Activated T-helper 2 cell treated with anti-CD3 and anti-CD28 coated beads, Interferon-gamma antibody, Interleukin-2, Interleukin-4, amounts not matched to agents 10 μg/mL and 5 μg/mL and 100 μg/mL, durations not matched to agents 14 hours and 24 hours and 36 hours (primary cell): ENCODE measurements at regions of chr1 and their contacts with region 1.

Region 1: GRCh38 chr1:238861342-238862066 is 524.9 kb upstream of the CHRM3 start:
- DNase-seq: no peak
- H3K4me3 Mint-ChIP-seq: no peak overlapping the region
- H3K27ac Mint-ChIP-seq: no peak overlapping the region
- H3K4me1 Mint-ChIP-seq: no peaks in the 10 kb centered on the region
- H3K27me3 Mint-ChIP-seq: no peaks in the 10 kb centered on the region

Region 2: GRCh38 chr1:238811211-238811879 is 50.2 kb before region 1 on chr1:
- intact Hi-C with region 1: no loop called
- DNase-seq: no peak
- H3K4me3 Mint-ChIP-seq: no peak overlapping the region
- H3K27ac Mint-ChIP-seq: no peak overlapping the region
- H3K4me1 Mint-ChIP-seq: no peaks in the 10 kb centered on the region
- H3K27me3 Mint-ChIP-seq: no peaks in the 10 kb centered on the region

Region 3: GRCh38 chr1:238826891-238827290 is 34.6 kb before region 1 on chr1:
- intact Hi-C with region 1: no loop called
- DNase-seq: no peak
- H3K4me3 Mint-ChIP-seq: no peak overlapping the region
- H3K27ac Mint-ChIP-seq: no peak overlapping the region
- H3K4me1 Mint-ChIP-seq: no peaks in the 10 kb centered on the region
- H3K27me3 Mint-ChIP-seq: no peaks in the 10 kb centered on the region

Region 4: DNA sequence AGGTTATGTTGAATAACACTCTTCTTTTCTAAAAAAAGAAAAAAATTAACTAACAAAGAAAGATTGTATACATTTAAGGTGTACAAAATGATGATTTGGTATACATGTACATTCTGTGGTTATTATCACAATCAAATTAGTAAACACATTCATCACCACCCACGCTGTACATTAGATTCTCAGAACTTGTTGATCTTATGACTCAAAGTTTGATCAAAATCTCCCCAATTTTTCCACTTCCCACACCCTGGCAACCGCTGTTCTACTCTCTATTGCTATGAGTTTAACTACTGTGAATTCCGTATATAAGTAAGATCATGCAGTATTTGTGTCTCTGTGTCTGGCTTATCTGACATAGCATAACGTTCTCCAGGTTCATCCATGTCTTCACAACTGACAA is 55.3 kb after region 1 on chr1:
- intact Hi-C with region 1: loop called (anchors 10 kb)
- DNase-seq: no peak
- H3K4me3 Mint-ChIP-seq: no peak overlapping the region
- H3K27ac Mint-ChIP-seq: no peak overlapping the region
- H3K4me1 Mint-ChIP-seq: no peaks in the 10 kb centered on the region
- H3K27me3 Mint-ChIP-seq: no peaks in the 10 kb centered on the region